Posterior vena cava (tissue), 2 donors: ENCODE measurements at regions of chr6 and their contacts with region 1.

Region 1: DNA sequence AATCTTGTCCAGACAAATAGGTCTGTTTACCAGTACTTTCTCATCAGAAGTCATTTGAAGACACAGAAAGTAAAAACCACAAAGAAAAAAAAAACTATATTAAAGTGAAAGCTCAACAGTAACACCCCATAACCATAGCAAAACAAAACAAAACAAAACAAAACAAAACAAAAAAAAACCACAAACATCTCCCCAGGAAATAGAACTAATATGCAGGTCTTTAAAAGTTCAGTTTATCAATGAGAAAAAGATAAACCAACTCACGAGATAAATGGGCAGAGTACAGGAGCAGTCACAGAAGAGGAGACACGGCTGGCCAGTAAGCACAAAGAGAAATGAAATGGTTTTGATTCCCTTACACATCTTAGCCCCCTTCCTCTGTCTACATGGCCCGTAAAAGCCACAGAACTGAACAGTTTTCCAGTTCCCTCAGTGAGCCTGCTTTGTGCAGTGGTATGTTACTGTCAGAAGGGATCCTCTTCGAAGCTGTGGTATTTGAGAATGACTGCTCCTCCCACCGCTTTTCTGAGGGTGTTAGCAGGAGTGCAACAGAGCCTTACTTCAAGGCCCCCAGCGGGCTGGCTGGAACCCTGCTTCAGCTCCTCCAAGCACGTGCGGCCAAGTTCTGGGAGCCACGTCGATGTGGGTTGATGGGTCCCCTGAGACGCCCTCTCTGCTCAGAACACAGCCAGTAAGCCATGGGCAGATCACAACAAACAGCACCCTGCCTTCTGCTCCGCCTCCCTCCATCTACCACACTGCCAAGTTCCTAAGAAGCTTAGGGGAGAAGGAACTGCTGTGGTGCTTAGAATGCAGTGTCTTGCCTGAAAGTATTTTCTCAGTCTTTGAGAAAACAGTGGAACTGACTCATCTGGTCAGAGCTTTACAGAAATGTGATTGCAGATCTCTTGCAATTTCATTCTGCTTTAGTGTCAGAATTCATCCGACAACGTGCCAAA is 14.0 kb downstream of the UST start:
- DNase-seq: peak; percentile 91

Region 2: GRCh38 chr6:148885136-148885870 is 124.5 kb after region 1 on chr6:
- intact Hi-C with region 1: loop called in 1 of 2 experiments (anchors 10 kb)
- DNase-seq: no peak